Ovary (tissue), 10 donors: ENCODE measurements at regions of chr9 and their contacts with region 1.

Region 1: GRCh38 chr9:37528652-37529510 is 43.1 kb downstream of the POLR1E start:
- DNase-seq: no peak
- H3K4me3 ChIP-seq: no peak overlapping the region
- H3K27ac ChIP-seq: no peak overlapping the region
- H3K4me1 ChIP-seq: no peaks in the 10 kb centered on the region
- H3K27me3 ChIP-seq: no peaks in the 10 kb centered on the region
- CTCF ChIP-seq: no peak
- EP300 ChIP-seq: no peak
- POLR2A ChIP-seq: no peak

Region 2: GRCh38 chr9:37561682-37562081 is 32.8 kb after region 1 on chr9:
- intact Hi-C with region 1: loop called in 1 of 4 experiments (anchors 1 kb)
- DNase-seq: no peak
- H3K4me3 ChIP-seq: no peak overlapping the region
- H3K27ac ChIP-seq: no peak overlapping the region
- H3K4me1 ChIP-seq: no peaks in the 10 kb centered on the region
- H3K27me3 ChIP-seq: no peaks in the 10 kb centered on the region
- CTCF ChIP-seq: no peak
- EP300 ChIP-seq: no peak
- POLR2A ChIP-seq: no peak